Naive thymus-derived CD4-positive, alpha-beta T cell (primary cell): ENCODE measurements at regions of chr5 and their contacts with region 1.

Region 1: GRCh38 chr5:26791433-26791832 is 247.0 kb downstream of the CDH9 start:
- DNase-seq: no peak
- ATAC-seq: no peak
- H3K4me3 ChIP-seq: no peak overlapping the region
- H3K4me3 Mint-ChIP-seq: no peak overlapping the region
- H3K27ac ChIP-seq: no peak overlapping the region
- H3K27ac Mint-ChIP-seq: no peak overlapping the region
- H3K4me1 ChIP-seq: no peaks in the 10 kb centered on the region
- H3K4me1 Mint-ChIP-seq: peaks cover 0 to 2% (median 0%) of the 10 kb centered on the region in 7 donors
- H3K27me3 ChIP-seq: no peaks in the 10 kb centered on the region
- H3K27me3 Mint-ChIP-seq: no peaks in the 10 kb centered on the region

Region 2: DNA sequence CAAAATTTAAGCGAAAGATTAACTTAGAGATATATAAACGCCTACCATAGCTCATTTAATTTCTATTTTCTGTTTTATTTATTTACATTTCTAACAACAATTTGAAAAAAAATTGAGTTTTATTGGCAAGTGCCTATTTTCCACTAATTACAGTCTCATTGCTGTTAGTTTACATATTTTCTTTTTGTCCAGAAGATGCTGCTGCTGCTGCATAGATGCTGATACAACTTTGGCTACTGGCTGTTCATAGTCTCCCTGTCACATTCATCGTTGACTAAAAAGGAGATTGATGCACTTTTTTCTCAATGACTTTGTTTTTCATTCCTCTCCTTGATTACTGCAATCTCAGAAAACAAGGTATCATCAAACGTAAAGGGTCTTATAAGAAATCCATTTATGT is 11.5 kb after region 1 on chr5:
- CTCF ChIA-PET with region 1: no interaction called
- POLR2A ChIA-PET with region 1: no interaction called
- intact Hi-C with region 1: loop called (anchors 1 kb)
- DNase-seq: no peak
- ATAC-seq: no peak
- H3K4me3 ChIP-seq: no peak overlapping the region
- H3K4me3 Mint-ChIP-seq: no peak overlapping the region
- H3K27ac ChIP-seq: no peak overlapping the region
- H3K27ac Mint-ChIP-seq: no peak overlapping the region
- H3K4me1 ChIP-seq: no peaks in the 10 kb centered on the region
- H3K4me1 Mint-ChIP-seq: no peaks in the 10 kb centered on the region
- H3K27me3 ChIP-seq: no peaks in the 10 kb centered on the region
- H3K27me3 Mint-ChIP-seq: no peaks in the 10 kb centered on the region